ENCODE measurements at regions of chr9 and their contacts with region 1.

Region 1: DNA sequence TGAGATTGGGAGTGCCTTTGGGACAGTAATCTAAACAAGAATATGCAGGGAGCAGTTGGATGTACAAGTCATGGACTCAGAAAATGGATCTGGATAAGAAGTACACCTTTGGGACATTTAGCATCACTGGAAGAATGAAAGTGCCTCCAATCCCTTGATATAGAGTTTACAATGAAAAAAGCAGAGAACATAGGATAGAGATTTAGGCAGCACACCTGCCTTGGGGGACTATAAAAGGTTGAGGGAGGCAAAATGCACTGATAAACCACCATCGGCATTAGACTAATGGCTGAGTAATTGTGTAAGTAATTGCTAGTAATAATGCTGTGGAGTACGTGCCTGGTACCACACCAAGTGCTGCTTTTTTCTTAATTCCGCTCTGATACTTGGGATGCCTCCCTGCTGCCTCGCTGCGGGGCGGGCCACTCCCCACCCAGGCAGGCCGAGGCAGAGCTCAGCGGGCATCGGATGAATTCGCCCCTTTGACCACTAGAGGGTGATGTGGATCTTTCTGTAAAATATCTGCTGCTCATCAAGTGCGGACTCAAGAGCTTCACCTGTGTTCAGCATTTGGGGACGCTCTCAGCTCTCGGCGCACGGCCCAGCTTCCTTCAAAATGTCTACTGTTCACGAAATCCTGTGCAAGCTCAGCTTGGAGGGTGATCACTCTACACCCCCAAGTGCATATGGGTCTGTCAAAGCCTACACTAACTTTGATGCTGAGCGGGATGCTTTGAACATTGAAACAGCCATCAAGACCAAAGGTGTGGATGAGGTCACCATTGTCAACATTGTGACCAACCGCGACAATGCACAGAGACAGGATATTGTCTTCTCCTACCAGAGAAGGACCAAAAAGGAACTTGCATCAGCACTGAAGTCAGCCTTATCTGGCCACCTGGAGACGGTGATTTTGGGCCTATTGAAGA is 99.9 kb downstream of the ANKRD18B start:
- DNase-seq: peak; percentile 68
- H3K4me3 Mint-ChIP-seq: no peak overlapping the region
- H3K27ac Mint-ChIP-seq: no peak overlapping the region
- H3K4me1 Mint-ChIP-seq: peaks cover 5% of the 10 kb centered on the region
- H3K27me3 Mint-ChIP-seq: peaks cover 26% of the 10 kb centered on the region

Region 2: GRCh38 chr9:33721674-33722358 is 97.9 kb after region 1 on chr9:
- intact Hi-C with region 1: loop called (anchors 1 kb)
- DNase-seq: peak; percentile 80
- H3K4me3 Mint-ChIP-seq: no peak overlapping the region
- H3K27ac Mint-ChIP-seq: no peak overlapping the region
- H3K4me1 Mint-ChIP-seq: peaks cover 1% of the 10 kb centered on the region
- H3K27me3 Mint-ChIP-seq: peaks cover 22% of the 10 kb centered on the region

Region 3: GRCh38 chr9:33908121-33908520 is 284.2 kb after region 1 on chr9:
- intact Hi-C with region 1: no loop called
- DNase-seq: no peak
- H3K4me3 Mint-ChIP-seq: no peak overlapping the region
- H3K27ac Mint-ChIP-seq: no peak overlapping the region
- H3K4me1 Mint-ChIP-seq: peaks cover 8% of the 10 kb centered on the region
- H3K27me3 Mint-ChIP-seq: no peaks in the 10 kb centered on the region